ENCODE measurements at regions of chr6 and their contacts with region 1.

Region 1: DNA sequence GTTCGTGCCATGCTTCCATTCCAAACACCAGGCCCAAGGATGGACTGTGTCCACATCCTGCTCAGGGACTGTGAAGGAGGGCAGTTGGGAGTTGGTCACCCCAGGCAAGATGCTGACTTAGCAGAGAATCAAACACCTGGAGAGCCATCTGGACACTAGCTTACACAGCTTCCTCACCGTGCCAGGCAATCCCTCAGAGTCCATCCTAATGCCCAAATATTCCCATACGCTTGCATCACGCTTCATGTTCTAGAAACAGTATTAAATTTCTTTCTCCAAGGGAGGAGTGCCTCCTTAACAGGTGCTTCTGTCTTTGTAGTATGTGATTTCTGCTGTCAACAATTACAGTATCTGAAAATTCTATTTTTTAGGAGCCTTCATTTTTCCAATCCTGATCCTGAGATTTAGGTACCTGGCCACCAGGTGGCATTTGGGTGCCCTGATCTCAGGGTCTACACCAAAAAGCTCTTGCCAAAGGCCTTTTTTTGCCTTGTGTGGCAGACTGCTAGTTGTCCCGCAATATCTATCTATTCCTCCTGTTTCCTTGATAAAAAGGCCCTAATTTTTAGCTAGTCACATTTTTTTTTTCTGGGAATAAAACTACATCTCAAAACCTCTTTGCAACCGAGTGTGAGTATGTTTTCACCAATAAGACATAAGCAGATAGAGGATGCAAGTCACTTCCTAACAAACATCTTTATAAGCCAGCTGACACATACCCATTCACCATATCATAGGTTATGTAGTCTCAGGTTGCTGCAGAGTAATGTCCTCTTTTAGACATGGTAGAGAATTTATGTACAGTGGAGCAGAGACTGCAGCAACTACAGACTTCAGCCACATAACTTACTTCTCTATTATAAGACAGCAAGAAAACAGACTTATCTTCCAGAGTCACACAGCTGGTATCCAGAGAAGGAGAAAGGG is 85.0 kb downstream of the PREP start:
- DNase-seq: peak; percentile 44
- H3K4me3 Mint-ChIP-seq: no peak overlapping the region
- H3K27ac Mint-ChIP-seq: peak overlapping the region; percentile 69
- H3K4me1 Mint-ChIP-seq: peaks cover 20% of the 10 kb centered on the region
- H3K27me3 Mint-ChIP-seq: no peaks in the 10 kb centered on the region
- CTCF ChIP-seq: peak; percentile 26

Region 2: GRCh38 chr6:105164418-105164817 is 153.5 kb before region 1 on chr6:
- CTCF ChIA-PET with region 1: interaction called, 3 read pairs
- POLR2A ChIA-PET with region 1: interaction called, 3 read pairs
- intact Hi-C with region 1: loop called (anchors 10 kb)
- DNase-seq: peak; percentile 57
- H3K4me3 Mint-ChIP-seq: no peak overlapping the region
- H3K27ac Mint-ChIP-seq: no peak overlapping the region
- H3K4me1 Mint-ChIP-seq: peaks cover 10% of the 10 kb centered on the region
- H3K27me3 Mint-ChIP-seq: no peaks in the 10 kb centered on the region
- CTCF ChIP-seq: no peak

Region 3: DNA sequence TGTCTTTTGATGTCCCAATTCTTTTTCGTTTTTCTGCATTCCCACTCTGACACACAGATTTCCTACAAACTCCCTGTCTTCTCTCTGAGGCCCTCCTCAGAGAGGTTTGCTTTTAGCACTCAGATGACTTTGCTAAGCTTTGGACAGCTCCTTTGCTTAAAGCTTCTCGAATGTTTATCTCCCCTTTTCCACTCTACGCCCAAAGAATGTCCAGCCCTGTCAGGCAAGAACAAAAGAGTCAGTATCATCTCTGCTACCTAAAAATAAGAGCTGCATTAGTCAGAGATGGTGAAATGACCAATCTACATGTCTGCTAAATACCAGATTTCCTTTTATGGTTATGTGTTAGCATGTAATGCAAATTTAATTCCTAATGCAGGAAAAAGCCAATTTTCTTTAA is 28.2 kb after region 1 on chr6:
- CTCF ChIA-PET with region 1: interaction called, 7 read pairs
- POLR2A ChIA-PET with region 1: interaction called, 11 read pairs
- intact Hi-C with region 1: no loop called
- DNase-seq: peak; percentile 56
- H3K4me3 Mint-ChIP-seq: no peak overlapping the region
- H3K27ac Mint-ChIP-seq: peak overlapping the region; percentile 67
- H3K4me1 Mint-ChIP-seq: peaks cover 11% of the 10 kb centered on the region
- H3K27me3 Mint-ChIP-seq: no peaks in the 10 kb centered on the region
- CTCF ChIP-seq: no peak

Region 4: GRCh38 chr6:105363100-105363754 is 45.4 kb after region 1 on chr6:
- CTCF ChIA-PET with region 1: interaction called, 78 read pairs
- POLR2A ChIA-PET with region 1: interaction called, 18 read pairs
- intact Hi-C with region 1: loop called (anchors 1 kb)
- DNase-seq: peak; percentile 51
- H3K4me3 Mint-ChIP-seq: no peak overlapping the region
- H3K27ac Mint-ChIP-seq: peak overlapping the region; percentile 78
- H3K4me1 Mint-ChIP-seq: peaks cover 42% of the 10 kb centered on the region
- H3K27me3 Mint-ChIP-seq: no peaks in the 10 kb centered on the region
- CTCF ChIP-seq: peak; percentile 36

Region 5: DNA sequence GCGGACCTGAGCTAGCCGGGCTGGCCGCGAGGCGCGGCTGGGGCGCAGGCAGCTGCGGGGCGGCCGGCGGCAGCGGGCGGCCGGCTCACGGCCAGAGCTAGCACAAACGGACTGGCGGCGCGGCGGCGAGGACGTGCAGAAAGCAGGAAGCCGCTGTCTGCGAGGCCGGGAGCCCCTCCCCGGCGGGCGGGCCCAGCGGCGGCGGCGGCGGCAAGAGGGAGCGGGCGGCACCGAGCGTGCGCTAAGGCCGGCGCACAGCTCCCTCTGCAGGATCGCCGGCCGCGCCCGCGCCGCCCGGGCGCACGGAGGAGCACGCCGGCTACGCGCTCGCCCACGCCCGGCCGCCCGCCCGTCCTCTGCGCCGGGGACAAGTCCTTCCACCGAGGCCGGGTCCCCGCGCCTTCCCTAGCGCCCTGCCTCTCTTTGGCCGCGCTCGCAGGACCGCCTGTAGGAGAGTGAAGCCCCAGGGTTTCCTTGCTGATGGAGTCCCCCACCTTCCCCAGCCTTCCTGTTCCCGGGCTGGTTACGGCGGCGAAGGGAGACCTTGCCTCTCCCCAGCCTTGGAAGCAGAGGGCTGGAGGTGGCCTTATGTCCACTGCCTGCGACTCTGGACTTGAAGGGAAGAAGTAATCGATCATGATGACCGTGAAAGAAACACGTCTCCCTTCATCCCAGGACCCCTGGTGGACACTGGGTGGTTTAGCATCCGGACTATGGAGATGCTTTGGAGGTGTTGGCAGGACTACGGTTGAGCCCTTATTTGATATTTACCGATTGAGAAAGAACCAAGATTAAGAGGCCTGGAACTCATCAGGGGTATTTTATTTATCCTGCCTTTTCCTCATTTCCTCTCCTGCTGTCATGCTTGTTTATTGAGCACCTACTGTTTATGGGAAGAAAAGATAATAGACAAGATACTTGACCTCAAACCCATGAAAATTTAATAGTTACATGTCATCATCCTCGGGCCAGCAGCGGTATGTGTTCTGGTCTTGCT is 85.4 kb after region 1 on chr6 and contains the start of gene PREP:
- CTCF ChIA-PET with region 1: interaction called, 20 read pairs
- POLR2A ChIA-PET with region 1: interaction called, 25 read pairs
- intact Hi-C with region 1: loop called (anchors 1 kb)
- DNase-seq: peak; percentile 85
- H3K4me3 Mint-ChIP-seq: peak within 1 kb of the TSS; percentile 82
- H3K27ac Mint-ChIP-seq: peak within 1 kb of the TSS; percentile 65
- H3K4me1 Mint-ChIP-seq: peaks cover 28% of the 10 kb centered on the region
- H3K27me3 Mint-ChIP-seq: no peaks in the 10 kb centered on the region
- CTCF ChIP-seq: peak; percentile 60
- total RNA-seq, gene PREP: 57.8 and 67.6 TPM in 2 replicates